Ascending aorta (tissue), 2 donors: ENCODE measurements at regions of chr4 and their contacts with region 1.

Region 1: GRCh38 chr4:185597532-185598188 is 62.4 kb upstream of the PDLIM3 start:
- DNase-seq: peak; percentile 28 to 88
- H3K4me3 ChIP-seq: no peak overlapping the region
- H3K27ac ChIP-seq: peak overlapping the region; percentile 66 to 72
- H3K4me1 ChIP-seq: peaks cover 0 to 17% of the 10 kb centered on the region in 2 donors
- H3K27me3 ChIP-seq: no peaks in the 10 kb centered on the region
- CTCF ChIP-seq: peak; percentile 93 to 99 (median 95)

Region 2: DNA sequence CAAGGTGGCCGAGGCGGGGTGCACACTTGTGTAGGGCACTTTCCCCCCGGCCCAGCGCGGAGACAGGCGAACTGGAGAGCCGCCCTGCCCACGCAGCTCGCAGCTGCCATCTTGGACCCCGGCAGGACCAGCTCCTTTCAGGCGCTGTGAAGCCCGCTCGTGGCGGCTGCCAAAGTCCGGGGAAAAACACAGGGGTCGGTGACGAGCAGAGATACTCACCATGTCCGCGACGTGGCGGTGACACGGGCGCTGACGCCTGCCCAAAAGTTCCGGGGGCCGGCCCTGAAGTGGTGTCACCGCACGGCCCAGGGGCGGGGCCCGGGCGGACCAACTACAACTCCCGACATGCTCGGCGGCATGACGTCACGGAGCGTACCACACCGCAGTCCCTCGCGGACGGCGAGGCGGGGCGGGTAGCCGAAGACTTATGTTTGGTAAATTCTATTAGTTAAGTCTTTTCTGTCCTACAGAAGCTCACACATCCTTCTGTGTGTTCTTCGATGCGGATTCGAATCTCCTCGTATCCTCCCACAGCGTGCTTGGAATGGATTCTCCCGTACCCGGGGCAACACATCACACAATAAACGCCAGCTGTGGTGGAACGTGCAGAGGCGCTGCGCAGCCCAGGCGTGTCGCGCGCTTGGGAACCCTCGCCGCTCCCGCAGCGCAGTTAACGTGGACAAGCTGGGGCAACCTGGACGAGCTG is 171.9 kb before region 1 on chr4 and contains the start of gene UFSP2:
- intact Hi-C with region 1: loop called (anchors 5 kb)
- DNase-seq: peak; percentile 69 to 95
- H3K4me3 ChIP-seq: peak within 1 kb of the TSS; percentile 66 to 80
- H3K27ac ChIP-seq: peak within 1 kb of the TSS; percentile 88 to 96
- H3K4me1 ChIP-seq: peaks cover 0 to 15% of the 10 kb centered on the region in 2 donors
- H3K27me3 ChIP-seq: no peaks in the 10 kb centered on the region
- CTCF ChIP-seq: no peak
- total RNA-seq, gene UFSP2: 8.6 TPM

Region 3: GRCh38 chr4:185534866-185535611 is 62.6 kb before region 1 on chr4 and contains the start of gene PDLIM3:
- intact Hi-C with region 1: loop called (anchors 2 kb)
- DNase-seq: peak in 1 of 2 donors; percentile 92
- H3K4me3 ChIP-seq: peak within 1 kb of the TSS; percentile 65 to 93
- H3K27ac ChIP-seq: peak within 1 kb of the TSS; percentile 94 to 98
- H3K4me1 ChIP-seq: peaks cover 0 to 3% of the 10 kb centered on the region in 2 donors
- H3K27me3 ChIP-seq: no peaks in the 10 kb centered on the region
- CTCF ChIP-seq: no peak
- total RNA-seq, gene PDLIM3: 445 TPM

Region 4: DNA sequence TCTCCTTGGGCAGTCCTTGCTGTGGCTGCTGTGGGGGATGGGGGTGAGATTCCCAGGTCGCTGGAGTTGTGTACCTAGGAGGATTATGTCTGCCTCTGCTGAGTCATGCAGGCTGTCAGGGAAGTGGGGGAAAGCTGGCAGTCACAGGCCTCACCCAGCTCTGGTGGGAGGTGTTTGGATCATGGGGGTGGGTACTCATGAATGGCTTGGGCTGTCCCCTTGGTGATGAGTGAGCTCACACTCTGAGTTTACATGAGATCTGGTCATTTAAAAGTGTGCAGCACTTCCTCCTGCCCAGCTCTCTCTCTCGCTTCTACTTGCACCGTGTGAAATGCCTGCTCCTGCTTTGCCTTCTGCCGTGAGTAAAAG is 37.8 kb before region 1 on chr4:
- intact Hi-C with region 1: no loop called
- DNase-seq: peak; percentile 66 to 82
- H3K4me3 ChIP-seq: no peak overlapping the region
- H3K27ac ChIP-seq: peak overlapping the region; percentile 60 to 80
- H3K4me1 ChIP-seq: peaks cover 6 to 7% of the 10 kb centered on the region in 2 donors
- H3K27me3 ChIP-seq: no peaks in the 10 kb centered on the region
- CTCF ChIP-seq: no peak